Sciatic nerve (tissue), 2 donors: ENCODE measurements at regions of chr7 and their contacts with region 1.

Region 1: GRCh38 chr7:13262929-13263530 is 575.6 kb downstream of the ARL4A start:
- DNase-seq: no peak
- ATAC-seq: peak; percentile 71

Region 2: GRCh38 chr7:11557627-11558026 is 1705.4 kb before region 1 on chr7:
- intact Hi-C with region 1: no loop called
- DNase-seq: no peak
- ATAC-seq: peak; percentile 50

Region 3: GRCh38 chr7:12524794-12525386 is 738.1 kb before region 1 on chr7:
- intact Hi-C with region 1: loop called (anchors 5 kb)
- DNase-seq: no peak
- ATAC-seq: no peak

Region 4: GRCh38 chr7:14321947-14322346 is 1058.9 kb after region 1 on chr7:
- intact Hi-C with region 1: no loop called
- DNase-seq: no peak
- ATAC-seq: no peak